ENCODE measurements at regions of chr17 and their contacts with region 1.

Region 1: GRCh38 chr17:31433091-31433790 is 41.8 kb downstream of the RAB11FIP4 start:
- DNase-seq: no peak
- H3K4me3 ChIP-seq: no peak overlapping the region
- H3K27ac ChIP-seq: no peak overlapping the region
- H3K4me1 ChIP-seq: no peaks in the 10 kb centered on the region
- H3K27me3 ChIP-seq: peaks cover 3% of the 10 kb centered on the region
- CTCF ChIP-seq: no peak

Region 2: GRCh38 chr17:31404028-31404954 is 28.9 kb before region 1 on chr17:
- CTCF ChIA-PET with region 1: no interaction called
- dilution Hi-C with region 1: no loop called
- in situ Hi-C with region 1: no loop called
- intact Hi-C with region 1: no loop called
- DNase-seq: peak; percentile 20
- H3K4me3 ChIP-seq: no peak overlapping the region
- H3K27ac ChIP-seq: no peak overlapping the region
- H3K4me1 ChIP-seq: no peaks in the 10 kb centered on the region
- H3K27me3 ChIP-seq: peaks cover 2% of the 10 kb centered on the region
- CTCF ChIP-seq: no peak

Region 3: DNA sequence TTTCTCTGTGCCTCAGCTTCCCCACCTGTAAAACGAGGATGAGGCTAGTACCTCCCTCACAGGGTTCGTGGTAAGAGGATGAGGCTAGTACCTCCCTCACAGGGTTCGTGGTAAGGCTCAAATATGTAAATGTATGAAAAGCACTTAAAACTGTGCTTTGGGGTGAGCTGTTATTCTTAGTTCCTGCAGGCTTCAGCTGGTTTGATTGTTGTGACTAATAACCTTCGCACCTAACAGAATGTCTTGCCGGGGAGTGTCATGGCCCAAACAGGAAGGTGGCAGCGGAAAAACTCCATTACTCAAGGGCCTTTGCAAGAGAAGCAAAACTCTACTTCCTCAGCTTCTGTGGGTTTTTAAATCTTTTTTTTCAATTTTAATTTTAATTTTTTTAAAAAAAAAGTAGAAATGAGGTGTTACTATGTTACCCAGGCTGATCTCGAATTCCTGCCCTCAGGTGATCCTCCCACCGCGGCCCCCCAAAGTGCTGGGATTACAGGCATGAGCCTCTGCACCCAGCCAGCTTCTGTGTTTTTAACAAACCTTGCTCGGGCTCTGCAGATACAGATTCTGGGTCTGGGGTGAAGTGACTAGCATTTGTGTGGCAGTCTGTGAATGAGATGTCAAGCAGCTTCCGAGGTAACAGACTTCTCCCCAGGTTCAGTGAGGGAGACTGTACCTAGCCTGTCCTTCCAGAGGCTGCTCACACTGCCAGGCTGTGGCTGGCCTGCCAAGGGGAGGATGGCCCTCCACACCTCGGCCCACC is 61.2 kb after region 1 on chr17:
- CTCF ChIA-PET with region 1: no interaction called
- dilution Hi-C with region 1: loop called (anchors 5 kb)
- in situ Hi-C with region 1: no loop called
- intact Hi-C with region 1: no loop called
- DNase-seq: peak; percentile 67
- H3K4me3 ChIP-seq: no peak overlapping the region
- H3K27ac ChIP-seq: no peak overlapping the region
- H3K4me1 ChIP-seq: peaks cover 13% of the 10 kb centered on the region
- H3K27me3 ChIP-seq: peaks cover 2% of the 10 kb centered on the region
- CTCF ChIP-seq: no peak

Region 4: DNA sequence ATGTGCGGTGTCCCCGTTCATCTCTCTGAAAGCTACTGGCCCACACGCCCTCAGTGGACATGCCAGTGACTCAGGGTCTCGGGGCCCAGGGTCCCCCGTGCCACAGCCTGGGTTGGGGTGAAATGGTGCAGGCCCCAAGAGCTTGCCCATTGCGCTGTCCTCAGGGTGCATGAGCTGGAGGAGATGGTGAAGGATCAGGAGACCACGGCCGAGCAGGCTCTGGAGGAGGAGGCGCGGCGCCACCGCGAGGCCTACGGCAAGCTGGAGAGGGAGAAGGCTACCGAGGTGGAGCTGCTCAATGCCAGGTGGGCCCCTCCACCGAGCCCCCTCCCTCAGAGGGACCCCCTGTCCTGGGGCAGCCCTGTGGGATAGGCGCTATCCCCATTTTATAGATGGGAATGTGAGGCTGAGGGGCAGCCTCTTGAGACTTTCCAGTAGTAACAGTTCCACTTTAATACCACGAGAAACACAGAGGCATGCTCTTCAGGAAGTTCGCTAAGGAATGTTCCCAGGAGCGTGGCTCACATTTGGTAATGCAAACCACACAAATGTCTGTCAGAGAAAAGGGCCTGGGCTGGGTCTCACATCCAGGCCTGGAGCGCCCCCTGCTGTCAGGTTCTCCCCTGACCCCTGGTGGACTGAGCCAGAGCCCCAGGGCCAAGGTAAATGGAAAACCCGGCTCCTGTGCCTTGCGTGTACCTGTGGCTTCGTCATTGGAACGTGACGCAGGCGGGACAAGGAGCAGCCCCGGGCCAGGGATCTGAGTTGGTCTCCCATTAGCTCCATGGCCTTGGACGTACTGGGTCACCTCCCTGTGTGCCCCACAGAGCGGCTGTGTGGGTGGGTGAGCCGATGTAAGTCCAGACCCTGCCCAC is 91.9 kb after region 1 on chr17:
- CTCF ChIA-PET with region 1: no interaction called
- dilution Hi-C with region 1: no loop called
- in situ Hi-C with region 1: loop called in 1 of 2 experiments (anchors 5 kb)
- intact Hi-C with region 1: loop called (anchors 1 kb)
- DNase-seq: peak; percentile 81
- H3K4me3 ChIP-seq: no peak overlapping the region
- H3K27ac ChIP-seq: no peak overlapping the region
- H3K4me1 ChIP-seq: peaks cover 5% of the 10 kb centered on the region
- H3K27me3 ChIP-seq: no peaks in the 10 kb centered on the region
- CTCF ChIP-seq: peak; percentile 91 to 98

Region 5: GRCh38 chr17:31842183-31843069 is 409.2 kb after region 1 on chr17:
- CTCF ChIA-PET with region 1: interaction called, 10 read pairs
- dilution Hi-C with region 1: no loop called
- in situ Hi-C with region 1: loop called (anchors 10 to 25 kb)
- intact Hi-C with region 1: loop called (anchors 1 kb)
- DNase-seq: no peak
- H3K4me3 ChIP-seq: peak overlapping the region in 1 of 3 experiments; percentile 22
- H3K27ac ChIP-seq: no peak overlapping the region
- H3K4me1 ChIP-seq: no peaks in the 10 kb centered on the region
- H3K27me3 ChIP-seq: no peaks in the 10 kb centered on the region
- CTCF ChIP-seq: peak; percentile 85 to 95

Region 6: DNA sequence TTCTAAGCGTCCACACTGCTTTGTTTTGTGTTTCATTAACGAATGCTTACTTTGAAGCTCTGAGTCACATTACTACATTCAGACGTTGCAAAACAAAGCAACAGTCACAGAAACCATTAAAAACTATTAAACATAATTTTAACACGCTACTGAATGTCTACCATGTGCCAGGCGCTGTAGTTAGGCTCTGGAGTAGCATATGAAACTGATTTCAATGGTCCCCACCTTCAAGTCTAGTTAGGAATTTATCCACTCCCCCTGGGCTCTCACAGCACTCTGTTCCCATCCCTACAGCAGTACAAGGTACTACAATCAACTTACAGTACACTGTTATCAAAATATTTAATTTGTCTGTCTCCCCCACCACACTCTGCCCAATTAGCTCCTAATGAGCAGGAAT is 467.6 kb after region 1 on chr17:
- CTCF ChIA-PET with region 1: no interaction called
- dilution Hi-C with region 1: no loop called
- in situ Hi-C with region 1: no loop called
- intact Hi-C with region 1: loop called (anchors 1 kb)
- DNase-seq: peak; percentile 38
- H3K4me3 ChIP-seq: peak overlapping the region; percentile 66 to 97 (median 83)
- H3K27ac ChIP-seq: peak overlapping the region; percentile 86
- H3K4me1 ChIP-seq: peaks cover 4% of the 10 kb centered on the region
- H3K27me3 ChIP-seq: no peaks in the 10 kb centered on the region
- CTCF ChIP-seq: no peak

Measured in mammary epithelial cell (primary cell).